ENCODE measurements at regions of chr11 and their contacts with region 1.

Region 1: DNA sequence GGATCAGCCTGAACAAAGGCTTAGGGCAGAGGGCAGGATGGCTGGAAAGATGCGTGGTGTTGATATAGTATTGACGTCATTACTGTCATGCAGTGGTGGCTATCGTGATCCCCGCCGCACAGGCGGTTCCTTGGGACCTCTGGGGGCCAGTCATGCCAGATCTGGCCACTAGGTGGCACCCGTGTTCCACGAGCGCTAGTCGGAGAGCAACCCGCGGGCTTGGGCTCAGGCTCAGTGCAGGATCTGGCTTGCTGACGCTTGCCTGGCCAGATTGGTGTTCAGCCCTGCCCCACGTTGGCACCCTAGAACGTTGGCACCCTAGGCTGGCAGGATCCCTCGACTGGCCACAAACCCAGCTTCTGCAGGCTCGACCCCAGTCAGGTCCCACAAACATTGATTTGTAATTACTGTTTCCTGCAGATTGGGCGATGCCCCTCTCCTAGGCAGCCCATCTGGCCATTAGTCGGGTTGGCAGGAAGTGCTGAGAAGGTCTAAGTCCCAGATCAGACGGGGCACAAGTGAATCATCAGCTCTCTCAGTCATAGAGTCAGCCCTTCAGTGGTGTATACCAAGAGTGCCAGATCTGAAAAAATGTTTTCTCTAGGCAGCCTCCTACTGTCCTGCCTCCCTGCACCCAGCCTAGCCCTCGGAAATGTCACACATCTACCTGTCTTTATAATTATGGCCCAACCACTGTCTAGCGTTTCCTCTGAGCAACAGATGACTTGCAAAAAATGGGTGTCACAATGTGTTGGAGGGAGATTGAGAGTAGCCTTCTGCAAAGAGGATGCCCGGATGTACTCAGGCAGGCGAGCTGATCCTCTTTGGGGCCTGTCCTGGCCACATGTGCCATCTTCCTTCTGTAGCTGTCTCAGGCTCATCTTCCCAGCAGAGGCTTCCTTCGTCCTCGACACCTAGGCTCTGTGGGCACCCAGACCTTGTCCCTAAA is 315.3 kb downstream of the TMEM135 start:
- DNase-seq: peak; percentile 69 to 96 (median 89)

Region 2: DNA sequence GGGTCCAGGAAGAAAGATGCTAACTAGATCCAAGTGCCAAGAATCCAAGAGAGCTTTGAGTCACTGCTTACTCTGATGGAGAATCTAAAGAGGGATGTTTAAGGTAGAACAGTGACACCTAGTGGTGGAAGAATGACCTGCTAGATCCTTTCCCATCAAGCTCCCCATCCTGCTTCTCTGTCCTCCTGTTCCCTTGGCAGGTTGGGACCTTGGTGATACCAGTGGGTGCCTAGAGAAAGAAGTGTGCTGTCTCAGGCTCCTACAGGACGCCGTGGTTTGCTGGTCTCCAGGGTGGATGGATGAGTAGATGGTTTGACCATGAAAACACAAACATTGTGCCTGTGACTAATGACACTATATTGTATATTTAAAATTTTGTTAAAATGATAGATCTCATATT is 68.4 kb after region 1 on chr11:
- intact Hi-C with region 1: loop called (anchors 2 kb)
- DNase-seq: peak in 23 of 42 donors; percentile 8 to 80 (median 37)

Region 3: DNA sequence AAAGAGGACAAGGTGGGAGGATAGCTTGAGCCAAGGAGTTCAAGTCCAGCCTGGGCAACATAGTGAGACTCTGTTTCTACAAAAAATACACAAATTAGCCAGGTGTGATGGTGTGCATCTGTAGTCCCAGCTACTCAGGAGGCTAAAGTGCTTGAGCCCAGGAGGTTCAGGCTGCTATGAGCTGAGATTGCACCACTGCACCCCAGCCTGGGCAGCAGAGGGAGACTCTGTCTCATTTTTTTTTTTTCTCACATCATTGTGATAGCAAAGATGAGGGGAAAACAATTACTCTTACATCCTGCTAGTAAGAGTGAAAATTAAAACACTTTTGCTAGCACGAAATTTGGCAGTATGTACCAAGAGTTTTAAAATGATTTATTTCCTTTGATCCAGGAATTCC is 148.4 kb after region 1 on chr11:
- intact Hi-C with region 1: no loop called
- DNase-seq: no peak